ENCODE measurements at regions of chr6 and their contacts with region 1.

Region 1: DNA sequence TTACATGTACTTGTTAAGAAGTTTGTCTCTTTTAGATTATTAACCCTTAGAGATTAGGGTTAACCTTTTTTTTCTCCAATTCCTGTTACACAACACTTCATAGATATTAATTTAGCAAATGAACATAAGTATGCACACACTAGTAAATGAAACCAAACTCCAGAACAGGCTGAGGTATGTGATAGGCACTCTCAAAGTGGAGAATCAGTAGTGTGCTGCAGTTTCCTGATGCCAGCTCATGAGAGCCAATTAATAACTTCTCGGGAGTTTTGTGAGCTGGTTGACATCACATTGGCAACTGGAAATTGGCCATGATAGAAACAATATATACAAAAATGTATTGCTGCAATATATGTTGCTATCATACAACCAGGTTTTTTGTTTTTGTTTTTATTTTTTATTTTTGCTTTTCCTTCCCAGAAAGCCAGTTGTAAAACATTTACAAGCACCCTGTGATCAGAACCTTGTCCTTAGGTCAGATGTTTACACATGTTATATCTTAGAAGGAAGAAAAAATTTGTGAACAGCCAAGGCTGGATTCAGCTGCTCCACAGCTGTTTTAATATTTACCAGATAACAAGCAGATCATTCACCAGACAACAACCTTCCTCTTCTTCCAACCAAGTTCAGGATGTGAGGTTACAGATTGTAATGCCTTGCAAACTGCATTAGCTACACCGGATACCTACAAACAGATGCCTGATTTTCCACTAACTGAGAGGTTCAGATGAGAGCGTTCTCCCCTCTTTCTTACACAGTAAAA is 42.4 kb upstream of the ECHDC1 start:
- DNase-seq: no peak
- H3K4me3 Mint-ChIP-seq: no peak overlapping the region
- H3K27ac Mint-ChIP-seq: no peak overlapping the region
- H3K4me1 Mint-ChIP-seq: no peaks in the 10 kb centered on the region
- H3K27me3 Mint-ChIP-seq: peaks cover 4% of the 10 kb centered on the region

Region 2: GRCh38 chr6:126797981-126798380 is 587.9 kb before region 1 on chr6:
- CTCF ChIA-PET with region 1: no interaction called
- POLR2A ChIA-PET with region 1: no interaction called
- intact Hi-C with region 1: loop called (anchors 5 kb)
- DNase-seq: no peak
- H3K4me3 Mint-ChIP-seq: no peak overlapping the region
- H3K27ac Mint-ChIP-seq: no peak overlapping the region
- H3K4me1 Mint-ChIP-seq: no peaks in the 10 kb centered on the region
- H3K27me3 Mint-ChIP-seq: peaks cover 1% of the 10 kb centered on the region

Region 3: GRCh38 chr6:127173156-127173940 is 212.5 kb before region 1 on chr6:
- CTCF ChIA-PET with region 1: no interaction called
- POLR2A ChIA-PET with region 1: no interaction called
- intact Hi-C with region 1: no loop called
- DNase-seq: no peak
- H3K4me3 Mint-ChIP-seq: no peak overlapping the region
- H3K27ac Mint-ChIP-seq: no peak overlapping the region
- H3K4me1 Mint-ChIP-seq: no peaks in the 10 kb centered on the region
- H3K27me3 Mint-ChIP-seq: peaks cover 15% of the 10 kb centered on the region

Measured in activated CD4-positive, alpha-beta memory T cell treated with anti-CD3 and anti-CD28 coated beads for 36 hours (primary cell).